GM13976 (cell line): ENCODE measurements at regions of chr15 and their contacts with region 1.

Region 1: DNA sequence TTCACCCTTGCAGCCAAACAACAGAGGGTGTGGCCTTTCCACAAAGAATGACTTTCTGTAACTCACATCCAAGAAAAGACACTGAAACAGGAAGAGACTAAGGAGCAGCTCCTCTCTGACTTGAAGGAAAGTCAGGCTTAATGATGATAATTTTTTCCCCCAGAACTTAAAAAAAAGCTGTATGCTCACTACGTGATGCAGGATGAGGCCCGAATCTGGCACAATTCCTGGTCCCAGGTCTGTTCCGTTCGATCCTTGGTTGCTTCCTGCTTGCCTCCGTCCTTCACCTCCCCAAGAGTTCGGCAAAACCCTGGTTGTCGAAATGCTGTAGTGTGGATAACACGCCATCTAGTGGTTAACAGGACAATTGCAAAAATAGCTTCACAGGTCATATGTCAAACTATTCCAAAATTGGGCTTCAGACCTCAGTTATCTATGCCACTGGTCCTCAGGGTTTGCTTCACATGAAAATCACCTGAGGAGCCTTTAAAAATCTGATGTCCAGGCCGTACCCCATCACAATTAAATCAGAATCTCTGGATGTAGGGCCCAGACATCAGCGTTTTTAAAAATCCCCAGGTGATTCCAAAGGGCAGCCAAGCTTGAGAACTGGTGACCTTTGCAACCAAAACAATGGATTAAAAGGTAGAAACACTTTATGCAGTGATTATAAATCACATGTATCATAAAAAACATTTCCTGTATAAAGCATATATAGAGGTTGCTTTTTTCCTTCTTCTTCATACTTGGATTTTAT is 28.1 kb upstream of the SYNM start:
- DNase-seq: peak; percentile 68
- CTCF ChIP-seq: peak; percentile 85

Region 2: GRCh38 chr15:98518823-98519561 is 557.7 kb before region 1 on chr15:
- in situ Hi-C with region 1: loop called (anchors 25 kb)
- DNase-seq: peak; percentile 80
- CTCF ChIP-seq: peak; percentile 44

Region 3: DNA sequence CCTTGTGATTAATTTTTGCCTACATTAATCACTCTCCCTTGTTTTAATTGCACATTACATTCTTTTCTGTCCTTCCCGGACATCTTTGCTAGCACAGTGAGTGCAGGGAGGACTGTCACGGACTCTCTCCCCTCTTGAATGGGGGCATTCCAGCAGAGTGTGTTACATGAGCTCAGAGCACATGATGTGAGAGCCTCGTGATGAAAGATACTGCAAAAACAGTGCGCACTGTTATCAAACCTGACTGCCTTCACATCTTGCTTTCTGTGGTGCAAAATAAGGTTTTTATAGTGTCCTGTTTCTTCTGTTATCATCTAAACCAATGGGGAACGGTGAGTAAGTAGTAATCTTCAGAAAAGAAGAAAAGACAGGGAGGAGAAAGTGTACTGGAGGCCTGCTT is 236.7 kb before region 1 on chr15:
- in situ Hi-C with region 1: no loop called
- DNase-seq: no peak
- CTCF ChIP-seq: no peak

Region 4: DNA sequence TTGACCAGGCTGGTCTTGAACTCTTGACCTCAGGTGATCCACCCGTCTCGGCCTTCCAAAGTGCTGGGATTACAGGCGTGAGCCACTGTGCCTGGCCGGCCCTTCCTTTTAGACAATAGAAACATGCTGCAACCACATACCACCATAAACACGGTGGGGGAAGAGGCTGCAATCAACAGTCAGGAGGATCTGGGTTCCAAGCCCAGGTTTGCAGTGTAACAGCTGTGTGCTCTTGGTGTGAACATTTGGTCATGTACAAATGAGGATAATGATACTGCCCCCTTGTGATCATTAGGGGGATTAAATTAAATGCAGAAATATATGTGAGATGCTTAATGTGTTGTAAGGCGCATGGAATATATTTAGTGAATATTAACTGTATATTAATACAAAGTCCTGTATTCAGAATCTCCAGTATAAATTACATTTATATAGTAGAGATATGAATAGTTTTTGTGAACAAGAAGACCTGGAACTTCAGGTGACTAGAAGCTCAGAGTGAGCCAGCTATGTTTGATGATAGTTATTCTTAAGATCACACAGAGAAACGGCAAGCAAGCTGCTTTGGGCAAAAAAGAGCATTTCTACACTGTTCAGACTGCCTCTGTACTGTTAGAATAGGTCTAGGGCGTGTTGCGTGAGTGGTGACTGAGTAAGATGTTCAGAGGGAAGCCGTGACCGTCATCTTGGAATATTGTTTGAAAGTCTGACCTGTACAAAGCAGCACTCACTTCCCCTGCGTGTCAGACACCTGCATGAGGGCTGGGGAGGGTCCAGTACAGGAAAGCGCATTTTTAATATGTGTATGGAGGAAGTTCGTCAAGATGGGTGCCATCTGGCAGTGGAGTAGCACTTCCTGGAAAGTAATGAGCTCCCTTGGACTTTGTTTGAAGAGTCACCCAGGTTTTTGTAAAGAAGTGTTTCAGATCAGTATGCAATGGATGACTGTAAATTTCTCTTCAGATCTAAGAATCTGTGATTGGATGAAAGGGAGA is 194.9 kb before region 1 on chr15:
- in situ Hi-C with region 1: loop called (anchors 10 kb)
- DNase-seq: peak; percentile 69
- CTCF ChIP-seq: peak; percentile 52

Region 5: GRCh38 chr15:98978153-98978552 is 98.6 kb before region 1 on chr15:
- in situ Hi-C with region 1: no loop called
- DNase-seq: no peak
- CTCF ChIP-seq: no peak